G401 (cell line): ENCODE measurements at regions of chr6 and their contacts with region 1.

Region 1: GRCh38 chr6:44151348-44152108 is 7.1 kb upstream of the CAPN11 start:
- DNase-seq: peak; percentile 65

Region 2: GRCh38 chr6:44096612-44097011 is 54.9 kb before region 1 on chr6:
- in situ Hi-C with region 1: loop called (anchors 5 kb)
- DNase-seq: peak; percentile 88

Region 3: GRCh38 chr6:44237813-44238433 is 86.4 kb after region 1 on chr6:
- in situ Hi-C with region 1: loop called (anchors 10 kb)
- DNase-seq: peak; percentile 78